ENCODE measurements at regions of chr22 and their contacts with region 1.

Region 1: DNA sequence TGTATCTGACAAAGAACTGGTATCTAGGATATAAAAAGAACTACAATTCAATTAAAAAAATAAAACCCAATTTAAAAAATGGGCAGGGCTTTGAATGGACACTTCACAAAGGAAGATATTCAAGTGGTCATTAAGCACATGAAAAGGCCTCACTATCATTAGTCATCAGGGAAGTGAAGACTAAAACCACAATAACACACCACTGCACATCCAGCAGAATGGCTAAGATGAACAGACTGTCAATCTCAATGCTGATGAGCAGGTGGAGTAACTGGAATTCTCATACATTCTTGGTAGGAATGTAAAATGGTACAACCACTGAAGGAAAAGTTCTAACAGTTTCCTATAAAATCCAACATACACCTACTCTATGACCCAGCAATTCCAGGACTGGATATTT is 8.9 kb downstream of the HPS4 start:
- DNase-seq: no peak
- H3K4me3 Mint-ChIP-seq: no peak overlapping the region
- H3K27ac Mint-ChIP-seq: no peak overlapping the region
- H3K4me1 Mint-ChIP-seq: peaks cover 28% of the 10 kb centered on the region
- H3K27me3 Mint-ChIP-seq: no peaks in the 10 kb centered on the region

Region 2: DNA sequence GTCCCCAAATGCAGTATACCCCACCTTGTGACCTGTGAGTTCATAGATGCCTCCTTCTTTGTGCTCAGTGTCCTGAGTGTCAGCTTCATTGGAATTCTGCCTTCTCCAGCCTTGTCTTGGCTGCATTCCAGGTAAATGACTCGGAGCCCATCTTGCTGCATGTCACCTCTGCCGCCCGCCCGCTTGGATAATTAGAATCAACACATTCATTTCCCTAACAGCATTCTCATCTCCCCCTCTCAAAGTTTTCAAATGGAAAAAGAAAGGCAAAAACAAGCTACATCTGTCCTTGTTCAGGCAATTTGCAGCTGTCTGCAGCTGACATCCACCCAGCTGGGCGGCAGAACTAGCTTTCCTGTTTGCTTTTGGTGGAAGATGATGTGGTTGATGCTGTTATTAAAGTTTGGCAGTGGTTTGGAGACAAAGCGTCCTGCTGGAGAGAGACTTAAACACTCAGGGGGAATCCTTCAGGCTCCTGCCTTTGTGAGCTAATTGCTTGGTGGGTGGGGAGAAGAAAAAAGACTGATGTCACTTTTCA is 504.2 kb before region 1 on chr22:
- CTCF ChIA-PET with region 1: no interaction called
- intact Hi-C with region 1: no loop called
- DNase-seq: no peak
- H3K4me3 Mint-ChIP-seq: no peak overlapping the region
- H3K27ac Mint-ChIP-seq: no peak overlapping the region
- H3K4me1 Mint-ChIP-seq: peaks cover 33% of the 10 kb centered on the region
- H3K27me3 Mint-ChIP-seq: no peaks in the 10 kb centered on the region

Region 3: DNA sequence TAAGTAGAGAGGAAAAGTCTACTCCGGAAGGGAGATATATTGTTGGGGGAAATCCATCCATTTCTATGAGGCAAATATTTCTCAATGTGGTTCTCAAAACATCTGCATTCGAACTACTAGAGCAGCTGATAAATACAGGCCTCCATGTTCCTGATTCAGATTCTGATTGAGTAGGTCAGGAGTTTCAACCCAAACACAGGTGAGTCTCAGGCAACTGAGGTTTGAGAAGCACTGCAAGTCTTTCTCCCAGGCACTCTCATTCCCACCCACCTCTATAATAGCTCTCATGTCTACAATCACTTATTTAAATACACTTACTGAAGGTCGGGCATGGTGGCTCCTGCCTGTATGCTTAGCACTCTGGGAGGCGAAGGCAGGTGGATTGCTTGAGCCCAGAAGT is 60.3 kb before region 1 on chr22:
- CTCF ChIA-PET with region 1: interaction called, 11 read pairs
- intact Hi-C with region 1: no loop called
- DNase-seq: no peak
- H3K4me3 Mint-ChIP-seq: no peak overlapping the region
- H3K27ac Mint-ChIP-seq: no peak overlapping the region
- H3K4me1 Mint-ChIP-seq: peaks cover 1% of the 10 kb centered on the region
- H3K27me3 Mint-ChIP-seq: no peaks in the 10 kb centered on the region

Measured in activated naive CD4-positive, alpha-beta T cell treated with anti-CD3 and anti-CD28 coated beads for 36 hours (primary cell).